ENCODE measurements at regions of chr11 and their contacts with region 1.

Region 1: DNA sequence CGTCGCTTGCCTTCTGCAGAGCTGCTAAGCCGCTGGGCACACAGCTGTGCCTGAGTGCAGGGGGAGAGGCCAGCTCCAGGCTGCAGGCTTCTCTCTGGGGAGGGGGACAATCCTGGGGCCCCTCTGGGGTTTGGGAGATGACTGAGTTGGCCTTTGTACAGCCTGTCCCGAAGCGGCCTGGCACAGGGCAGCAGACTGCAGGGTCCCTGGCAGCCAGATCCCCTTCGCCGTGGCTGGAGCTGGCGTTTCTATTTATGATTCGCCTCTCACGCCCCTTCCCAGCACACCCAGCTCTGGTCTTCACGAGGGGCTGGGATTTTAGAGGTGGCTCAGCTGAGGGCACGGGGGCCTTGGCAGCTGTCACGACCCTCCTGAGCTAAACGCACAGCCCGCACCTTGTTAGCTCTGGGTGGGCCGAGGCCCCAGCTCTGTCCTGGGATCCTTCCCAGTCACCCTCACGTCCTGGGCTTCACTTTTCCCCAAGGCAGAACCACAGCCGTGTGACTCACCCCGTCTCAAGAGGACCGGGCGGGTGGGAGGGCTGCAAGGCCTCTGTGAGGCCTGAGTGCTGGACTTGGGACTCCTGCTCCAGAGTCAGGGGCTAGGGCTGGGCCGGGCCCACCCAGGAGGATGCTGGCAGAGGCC is 18.4 kb downstream of the OSBPL5 start:
- DNase-seq: no peak
- H3K4me3 ChIP-seq: no peak overlapping the region
- H3K27ac ChIP-seq: no peak overlapping the region
- H3K4me1 ChIP-seq: peaks cover 4% of the 10 kb centered on the region
- H3K27me3 ChIP-seq: no peaks in the 10 kb centered on the region
- CTCF ChIP-seq: no peak
- EP300 ChIP-seq: no peak
- POLR2A ChIP-seq: no peak

Region 2: GRCh38 chr11:1889224-1890120 is 1257.3 kb before region 1 on chr11:
- intact Hi-C with region 1: no loop called
- DNase-seq: peak in 2 of 5 donors; percentile 11 to 35
- H3K4me3 ChIP-seq: no peak overlapping the region
- H3K27ac ChIP-seq: no peak overlapping the region
- H3K4me1 ChIP-seq: no peaks in the 10 kb centered on the region
- H3K27me3 ChIP-seq: no peaks in the 10 kb centered on the region
- CTCF ChIP-seq: no peak
- EP300 ChIP-seq: no peak
- POLR2A ChIP-seq: no peak

Region 3: GRCh38 chr11:3123761-3124733 is 22.7 kb before region 1 on chr11:
- intact Hi-C with region 1: loop called in 1 of 4 experiments (anchors 2 kb)
- DNase-seq: peak; percentile 69 to 88 (median 79)
- H3K4me3 ChIP-seq: no peak overlapping the region
- H3K27ac ChIP-seq: no peak overlapping the region
- H3K4me1 ChIP-seq: peaks cover 6% of the 10 kb centered on the region
- H3K27me3 ChIP-seq: no peaks in the 10 kb centered on the region
- CTCF ChIP-seq: no peak
- EP300 ChIP-seq: peak; percentile 33
- POLR2A ChIP-seq: no peak